Transverse colon (tissue), 4 donors: ENCODE measurements at regions of chr5 and their contacts with region 1.

Region 1: DNA sequence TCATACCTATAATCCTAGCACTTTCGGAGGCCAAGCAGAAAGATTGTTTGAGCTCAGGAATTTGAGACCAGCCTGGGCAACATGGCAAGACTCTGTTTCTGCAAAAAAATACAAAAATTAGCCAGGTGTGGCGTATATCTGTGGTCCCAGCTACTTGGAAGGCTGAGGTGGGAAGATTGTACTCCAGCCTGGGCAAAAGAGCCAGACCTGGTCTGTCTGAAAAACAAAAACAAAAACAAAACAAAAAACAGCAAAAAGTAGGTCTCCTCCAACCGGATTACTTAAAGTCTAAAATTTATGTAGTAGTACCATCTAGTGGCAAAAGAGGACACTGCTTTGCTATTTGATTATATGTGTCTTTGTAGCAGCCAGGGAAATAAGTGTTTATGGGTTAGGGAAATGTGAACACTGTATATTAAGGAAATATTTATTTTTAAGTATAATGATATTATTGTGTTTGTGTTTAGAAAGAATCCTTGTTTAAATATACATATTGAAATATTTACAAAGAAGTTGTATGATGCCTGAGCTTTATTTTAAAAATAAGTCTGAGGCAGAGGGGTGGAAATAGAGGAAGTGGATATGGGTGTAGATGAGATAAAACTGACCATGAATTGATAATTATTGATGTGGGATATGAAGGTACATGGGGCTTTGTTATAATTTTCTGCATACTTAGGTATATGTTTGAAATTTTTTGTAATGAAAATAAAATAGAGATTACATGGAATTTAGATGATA is 20.0 kb downstream of the APC start:
- DNase-seq: no peak
- H3K4me3 ChIP-seq: no peak overlapping the region
- H3K27ac ChIP-seq: no peak overlapping the region
- H3K4me1 ChIP-seq: peaks cover 0 to 22% (median 2%) of the 10 kb centered on the region in 4 donors
- H3K27me3 ChIP-seq: no peaks in the 10 kb centered on the region
- CTCF ChIP-seq: peak; percentile 78 to 88 (median 83)
- EP300 ChIP-seq: no peak
- POLR2A ChIP-seq: no peak

Region 2: DNA sequence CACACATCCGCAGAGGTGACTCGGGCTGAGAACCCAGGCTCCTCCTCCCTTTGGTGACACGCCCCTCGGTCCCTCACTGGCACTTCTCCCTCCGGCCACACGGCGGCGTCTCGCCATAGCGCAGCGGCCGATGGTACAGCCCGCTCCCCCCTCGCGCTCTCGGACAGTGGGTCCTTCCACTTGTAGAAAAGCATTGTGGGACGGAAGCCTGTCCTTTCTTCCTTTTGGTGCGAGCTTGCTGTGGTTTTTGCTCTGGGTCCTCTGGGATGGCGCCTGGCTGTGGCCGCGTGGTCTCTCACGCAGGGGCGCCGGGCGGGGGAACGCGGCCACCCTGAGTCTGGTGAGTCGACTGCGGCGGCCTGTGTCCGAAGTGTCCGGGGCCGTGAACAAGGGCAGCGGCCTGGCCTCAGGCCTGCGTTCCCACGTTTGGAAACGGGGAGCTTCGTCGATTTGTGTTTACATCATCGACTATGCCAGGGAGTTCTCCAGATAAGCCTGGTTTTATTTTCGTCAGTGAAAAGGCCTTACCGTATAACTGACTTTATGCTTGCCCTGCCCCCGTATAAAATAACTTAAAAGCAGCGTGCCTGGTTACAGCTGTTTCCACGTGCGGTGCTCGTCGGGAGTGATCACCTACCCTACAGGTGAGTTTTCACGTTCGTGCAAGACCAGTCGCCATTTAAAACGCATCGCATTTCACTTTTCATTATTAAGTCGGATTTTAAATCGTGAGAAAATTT is 596.8 kb before region 1 on chr5:
- in situ Hi-C with region 1: loop called in 1 of 4 experiments (anchors 25 kb)
- intact Hi-C with region 1: no loop called
- DNase-seq: peak; percentile 95
- H3K4me3 ChIP-seq: peak overlapping the region; percentile 76 to 97 (median 85)
- H3K27ac ChIP-seq: peak overlapping the region; percentile 79 to 87 (median 86)
- H3K4me1 ChIP-seq: peaks cover 8 to 15% (median 13%) of the 10 kb centered on the region in 4 donors
- H3K27me3 ChIP-seq: no peaks in the 10 kb centered on the region
- CTCF ChIP-seq: peak; percentile 94 to 99 (median 97)
- EP300 ChIP-seq: no peak
- POLR2A ChIP-seq: peak; percentile 89

Region 3: GRCh38 chr5:113081881-113082546 is 324.4 kb after region 1 on chr5:
- in situ Hi-C with region 1: no loop called
- intact Hi-C with region 1: no loop called
- DNase-seq: no peak
- H3K4me3 ChIP-seq: no peak overlapping the region
- H3K27ac ChIP-seq: no peak overlapping the region
- H3K4me1 ChIP-seq: no peaks in the 10 kb centered on the region
- H3K27me3 ChIP-seq: no peaks in the 10 kb centered on the region
- CTCF ChIP-seq: no peak
- EP300 ChIP-seq: no peak
- POLR2A ChIP-seq: no peak